K562 (cell line): ENCODE measurements at regions of chr14 and their contacts with region 1.

Region 1: DNA sequence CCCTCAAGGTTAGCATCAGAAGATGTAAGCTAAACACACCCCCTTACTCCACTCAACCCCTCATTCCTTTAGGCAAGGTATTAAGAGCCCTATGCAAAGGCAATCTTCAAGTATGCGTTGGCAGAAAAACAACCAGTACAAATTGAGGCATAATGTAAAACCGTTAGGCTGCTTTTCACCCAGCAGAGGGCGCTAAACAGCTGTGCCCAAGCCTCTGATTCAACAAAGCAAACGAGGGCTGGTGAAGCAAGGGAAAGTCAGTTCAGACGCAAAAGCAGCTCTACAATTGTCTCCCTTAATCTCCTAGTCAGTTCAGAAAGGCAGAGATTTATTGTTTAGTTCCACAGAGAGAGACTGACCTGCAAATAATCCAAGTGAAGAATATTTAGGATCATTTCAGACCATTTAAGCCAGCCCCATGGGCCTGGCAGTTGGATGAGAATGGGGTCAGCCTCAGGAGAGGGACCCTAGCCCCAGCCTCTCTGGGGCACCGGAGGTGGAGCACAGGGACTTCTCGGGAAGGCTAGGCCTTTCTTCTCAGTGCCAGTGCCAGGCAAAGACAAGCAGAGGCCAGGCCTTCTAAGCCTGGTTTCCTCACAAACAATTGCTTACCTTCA is 23.5 kb downstream of the DCAF5 start:
- DNase-seq: peak; percentile 51 to 79 (median 57)
- ATAC-seq: peak; percentile 82
- H3K4me3 ChIP-seq: no peak overlapping the region
- H3K27ac ChIP-seq: no peak overlapping the region
- H3K4me1 ChIP-seq: peaks cover 0 to 17% of the 10 kb centered on the region in 2 experiments; a peak in 2 of 5 replicates
- H3K27me3 ChIP-seq: no peaks in the 10 kb centered on the region
- CTCF ChIP-seq: peak; percentile 78 to 85 (median 79)
- EP300 ChIP-seq: no peak
- POLR2A ChIP-seq: no peak
- RAD21 ChIP-seq: peak; percentile 72 to 76

Region 2: GRCh38 chr14:69079183-69079742 is 50.1 kb before region 1 on chr14:
- CTCF ChIA-PET with region 1: no interaction called
- POLR2A ChIA-PET with region 1: no interaction called
- in situ Hi-C with region 1: no loop called
- intact Hi-C with region 1: no loop called
- DNase-seq: no peak
- ATAC-seq: no peak
- H3K4me3 ChIP-seq: no peak overlapping the region
- H3K27ac ChIP-seq: no peak overlapping the region
- H3K4me1 ChIP-seq: no peaks in the 10 kb centered on the region
- H3K27me3 ChIP-seq: no peaks in the 10 kb centered on the region
- CTCF ChIP-seq: no peak
- EP300 ChIP-seq: no peak
- POLR2A ChIP-seq: no peak
- RAD21 ChIP-seq: no peak

Region 3: DNA sequence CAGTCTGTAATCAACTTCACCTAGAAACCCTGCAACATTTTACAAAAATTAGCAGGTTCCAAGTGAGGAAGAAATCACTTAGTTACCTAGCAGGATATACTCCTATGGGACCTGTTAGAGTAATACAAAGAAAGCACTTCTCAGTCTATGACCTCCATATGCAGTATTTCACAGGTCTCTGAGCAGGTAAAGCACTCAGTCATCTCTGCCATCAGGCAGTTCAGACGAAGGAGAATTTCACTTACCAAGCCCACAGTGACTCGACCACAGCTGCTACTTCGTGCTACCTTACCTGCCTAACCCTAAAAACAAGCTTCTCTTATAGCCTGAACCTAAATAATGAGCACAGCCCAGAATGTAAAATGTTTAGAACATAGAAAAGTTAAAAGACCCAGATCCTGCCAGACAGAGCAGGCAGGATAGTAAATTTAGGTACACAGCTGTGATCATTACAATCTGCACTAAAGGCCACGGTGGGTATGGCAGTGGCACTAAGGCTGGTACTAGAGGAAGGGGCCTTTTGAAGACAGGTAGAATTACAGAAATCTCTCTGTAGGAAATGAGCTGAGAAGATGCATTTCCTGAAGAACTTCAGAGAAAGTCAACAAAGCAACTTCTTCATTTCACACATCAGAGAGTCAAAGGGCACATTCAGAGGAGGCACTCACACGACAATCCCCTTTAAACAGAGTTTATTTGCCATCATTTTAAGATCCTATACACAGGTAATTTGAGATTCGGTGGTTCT is 12.2 kb before region 1 on chr14:
- CTCF ChIA-PET with region 1: no interaction called
- POLR2A ChIA-PET with region 1: interaction called, 14 read pairs
- in situ Hi-C with region 1: no loop called
- intact Hi-C with region 1: no loop called
- DNase-seq: no peak
- ATAC-seq: no peak
- H3K4me3 ChIP-seq: no peak overlapping the region
- H3K27ac ChIP-seq: no peak overlapping the region
- H3K4me1 ChIP-seq: no peaks in the 10 kb centered on the region
- H3K27me3 ChIP-seq: no peaks in the 10 kb centered on the region
- CTCF ChIP-seq: no peak
- EP300 ChIP-seq: no peak
- POLR2A ChIP-seq: no peak
- RAD21 ChIP-seq: no peak

Region 4: DNA sequence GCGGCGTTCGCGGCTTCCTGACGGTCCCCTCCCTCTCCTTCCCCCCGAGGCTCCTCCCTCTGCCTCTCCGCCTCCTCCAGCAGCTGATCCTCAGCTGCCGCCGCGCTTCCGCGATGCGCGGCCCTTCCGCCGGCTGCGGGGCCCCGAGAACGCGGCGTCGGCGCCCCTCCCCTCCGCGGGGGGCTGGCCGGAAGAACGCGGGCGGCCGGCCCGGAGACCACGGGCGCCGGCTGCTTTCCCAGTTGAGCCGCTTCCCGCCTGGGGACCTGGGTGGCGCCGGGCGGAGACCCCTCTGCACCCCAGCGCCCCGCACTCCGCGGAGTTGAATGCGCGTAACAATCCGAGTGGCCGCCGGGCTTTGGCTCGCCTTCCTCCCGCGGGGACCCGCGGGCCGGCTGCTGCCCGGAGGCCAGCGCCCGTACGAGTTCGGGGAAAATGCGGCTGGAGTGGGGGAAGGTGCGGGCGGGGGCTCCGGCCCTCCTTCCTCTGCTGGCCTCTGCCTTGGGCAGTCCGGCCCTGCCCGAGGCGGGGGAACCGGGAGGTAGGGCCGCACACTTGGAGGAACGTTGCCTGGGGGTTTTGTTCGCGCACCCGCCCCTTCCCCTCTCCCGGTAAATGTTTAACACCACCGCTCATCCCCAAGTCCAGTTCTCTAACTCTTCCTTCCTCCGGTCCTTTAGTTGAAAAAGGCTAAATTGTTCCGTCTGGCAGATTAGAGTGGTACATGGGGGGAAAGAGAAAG is 23.9 kb after region 1 on chr14:
- CTCF ChIA-PET with region 1: no interaction called
- POLR2A ChIA-PET with region 1: interaction called, 7 read pairs
- in situ Hi-C with region 1: no loop called
- intact Hi-C with region 1: loop called (anchors 2 kb)
- DNase-seq: peak; percentile 86 to 95 (median 90)
- ATAC-seq: peak; percentile 90
- H3K4me3 ChIP-seq: peak overlapping the region; percentile 90
- H3K27ac ChIP-seq: peak overlapping the region; percentile 66
- H3K4me1 ChIP-seq: peaks cover 19 to 20% of the 10 kb centered on the region in 2 experiments; a peak in 4 of 5 replicates
- H3K27me3 ChIP-seq: no peaks in the 10 kb centered on the region
- CTCF ChIP-seq: no peak
- EP300 ChIP-seq: no peak
- POLR2A ChIP-seq: peak; percentile 62
- RAD21 ChIP-seq: no peak

Region 5: DNA sequence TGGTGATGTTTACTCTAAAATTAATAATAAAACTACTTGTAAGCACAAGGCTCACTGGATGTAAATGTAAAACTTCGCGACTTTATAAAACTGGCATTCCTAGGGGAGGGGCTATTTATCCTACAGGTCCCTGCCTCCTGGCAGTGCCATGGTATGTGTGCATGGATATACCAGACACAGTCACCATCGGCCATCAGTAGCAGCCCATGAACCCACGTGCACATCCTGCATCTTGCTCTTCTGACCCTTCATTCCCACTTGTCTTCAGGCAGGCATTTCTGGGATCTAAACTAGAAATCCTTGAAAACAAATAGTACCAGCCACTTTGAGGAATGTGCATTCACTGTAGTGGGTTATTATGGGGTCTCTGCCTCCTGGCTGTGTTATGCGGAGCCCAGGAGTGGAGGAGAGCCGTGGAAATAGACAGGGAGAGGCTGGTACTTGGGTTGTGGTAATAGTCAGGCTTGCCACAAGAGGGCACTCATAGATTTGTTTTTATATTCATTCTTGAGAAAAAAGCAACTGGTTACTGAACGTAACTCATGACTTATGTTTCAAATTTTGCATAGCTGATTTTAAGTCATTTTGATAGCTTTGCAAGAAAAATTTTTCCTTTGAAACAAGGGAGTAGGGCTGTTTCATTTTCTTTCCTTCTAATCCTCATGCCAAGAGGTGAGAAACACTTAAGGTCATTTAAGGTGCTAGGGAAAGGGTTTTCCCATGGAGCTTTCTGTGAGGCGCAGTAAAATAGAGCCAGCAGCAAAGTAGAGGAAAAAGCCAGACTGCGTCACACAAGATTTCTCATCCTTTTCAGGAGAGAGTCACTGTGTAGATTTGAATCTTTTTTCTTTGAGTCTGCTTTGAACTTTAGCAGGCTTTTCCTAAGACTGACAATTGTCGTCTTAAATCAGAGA is 113.2 kb after region 1 on chr14:
- CTCF ChIA-PET with region 1: interaction called, 3 read pairs
- POLR2A ChIA-PET with region 1: no interaction called
- in situ Hi-C with region 1: no loop called
- intact Hi-C with region 1: loop called (anchors 5 kb)
- DNase-seq: peak; percentile 51 to 59 (median 56)
- ATAC-seq: peak; percentile 82
- H3K4me3 ChIP-seq: no peak overlapping the region
- H3K27ac ChIP-seq: no peak overlapping the region
- H3K4me1 ChIP-seq: peaks cover 1 to 3% of the 10 kb centered on the region in 2 experiments; a peak in 1 of 5 replicates
- H3K27me3 ChIP-seq: peaks cover 0 to 2% of the 10 kb centered on the region in 2 experiments; a peak in 1 of 5 replicates
- CTCF ChIP-seq: peak; percentile 48 to 69 (median 68); a peak in 5 of 6 replicates
- EP300 ChIP-seq: no peak
- POLR2A ChIP-seq: no peak
- RAD21 ChIP-seq: peak; percentile 41 to 63; a peak in 3 of 4 replicates

Region 6: DNA sequence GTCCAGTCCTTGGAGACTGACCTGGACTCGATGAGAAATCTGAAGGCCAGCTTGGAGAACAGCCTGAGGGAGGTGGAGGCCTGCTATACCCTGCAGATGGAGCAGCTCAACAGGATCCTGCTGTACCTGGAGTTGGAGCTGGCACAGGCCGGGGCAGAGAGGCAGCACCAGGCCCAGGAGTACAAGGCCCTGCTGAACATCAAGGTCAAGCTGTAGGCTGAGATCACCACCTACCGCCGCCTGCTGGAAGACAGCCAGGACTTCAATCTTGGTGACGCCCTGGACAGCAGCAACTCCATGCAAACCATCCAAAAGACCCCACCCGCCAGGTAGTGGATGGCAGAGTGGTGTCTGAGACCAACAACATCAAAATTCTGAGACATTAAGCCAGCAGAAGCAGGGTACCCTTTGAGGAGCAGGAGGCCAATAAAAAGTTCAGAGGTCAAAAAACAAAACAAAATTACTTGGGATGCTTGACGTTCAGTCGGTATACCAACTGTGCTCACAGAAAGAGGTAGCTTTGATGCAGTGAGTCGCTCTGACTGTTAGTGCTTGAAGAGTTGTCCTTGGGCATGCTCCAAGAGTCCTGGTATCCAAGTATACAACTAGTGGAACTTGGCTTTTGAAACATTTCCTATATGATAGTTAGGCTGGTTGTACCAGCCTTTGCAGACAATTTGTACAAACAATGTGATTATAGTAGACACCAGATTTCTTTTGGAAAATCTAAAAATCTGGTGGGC is 1466.2 kb after region 1 on chr14:
- CTCF ChIA-PET with region 1: no interaction called
- POLR2A ChIA-PET with region 1: no interaction called
- in situ Hi-C with region 1: no loop called
- intact Hi-C with region 1: no loop called
- DNase-seq: no peak
- ATAC-seq: no peak
- H3K4me3 ChIP-seq: no peak overlapping the region
- H3K27ac ChIP-seq: no peak overlapping the region
- H3K4me1 ChIP-seq: no peaks in the 10 kb centered on the region
- H3K27me3 ChIP-seq: no peaks in the 10 kb centered on the region
- CTCF ChIP-seq: no peak
- EP300 ChIP-seq: no peak
- POLR2A ChIP-seq: no peak
- RAD21 ChIP-seq: no peak